ENCODE measurements at regions of chr17 and their contacts with region 1.

Region 1: DNA sequence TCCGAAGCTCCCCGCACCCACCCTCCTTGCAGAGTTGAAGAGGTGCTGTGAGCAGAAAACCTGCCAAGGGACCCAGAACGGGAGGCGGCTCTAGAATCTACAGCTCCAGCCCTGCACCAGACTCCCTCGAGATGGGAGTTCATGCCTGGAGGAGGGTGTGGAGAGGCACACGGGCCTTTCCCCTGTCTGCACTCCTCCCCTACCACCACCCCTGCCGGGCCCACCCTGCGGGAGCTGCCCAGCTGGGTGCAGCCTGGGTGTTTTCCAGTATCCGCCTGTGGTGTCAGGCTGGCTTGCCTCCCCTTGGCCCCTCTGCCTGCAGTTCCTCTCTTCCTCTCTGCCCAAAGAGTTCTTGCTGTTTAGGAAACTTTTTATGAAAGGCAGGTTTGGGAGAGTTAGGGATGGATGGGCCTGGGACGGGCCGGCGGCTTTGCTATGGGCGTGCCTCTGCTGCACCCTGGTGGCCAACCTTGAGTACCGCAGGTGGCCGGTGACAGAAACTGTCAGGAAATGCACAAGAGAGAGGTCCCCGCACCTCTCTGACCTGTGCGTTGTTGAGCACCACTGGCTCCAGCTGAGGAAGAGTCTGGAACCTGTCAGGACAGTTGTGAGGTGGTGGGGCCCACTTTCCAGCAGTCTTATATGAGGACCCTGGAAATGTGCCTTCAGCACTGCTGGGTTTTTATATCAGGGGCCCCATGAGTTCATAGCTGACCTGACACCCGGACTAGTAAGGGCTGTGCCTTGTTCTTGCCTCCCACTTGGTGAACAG is 354.1 kb downstream of the SEC14L1 start:
- DNase-seq: peak; percentile 93

Region 2: DNA sequence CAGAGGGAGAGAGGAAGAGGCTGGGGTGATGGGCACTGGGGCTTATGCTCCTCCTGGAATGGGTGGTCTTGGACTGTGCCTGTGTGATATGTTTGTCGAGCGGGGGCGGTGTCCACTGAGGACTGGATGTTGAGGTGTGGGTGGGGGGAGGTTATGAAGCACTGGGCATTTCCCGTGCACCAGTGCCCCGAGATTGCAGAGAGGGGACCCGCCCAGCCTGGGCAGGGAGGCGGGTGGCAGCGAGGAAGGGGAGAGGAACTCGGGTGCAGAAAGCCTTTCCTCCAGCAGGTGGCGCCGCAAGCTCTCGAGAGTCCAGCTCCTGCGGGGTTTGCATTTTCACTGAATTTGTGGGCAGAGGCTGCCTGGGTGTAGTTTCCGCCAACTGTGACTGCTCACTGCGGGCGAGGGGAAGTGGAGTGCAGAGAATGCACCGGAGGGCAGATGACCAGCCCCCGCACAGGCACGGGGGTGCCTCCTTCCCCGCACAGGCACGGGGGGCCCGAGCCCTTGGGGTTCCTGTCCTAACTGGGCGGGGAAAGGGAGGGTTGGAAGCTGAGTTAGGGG is 163.5 kb before region 1 on chr17:
- intact Hi-C with region 1: loop called (anchors 1 to 2 kb)
- DNase-seq: peak; percentile 98

Region 3: GRCh38 chr17:77744066-77744988 is 249.5 kb after region 1 on chr17:
- intact Hi-C with region 1: no loop called
- DNase-seq: no peak

Measured in posterior vena cava (tissue), 2 donors.